ENCODE measurements at regions of chr17 and their contacts with region 1.

Region 1: GRCh38 chr17:77011173-77012011 is 129.4 kb upstream of the SEC14L1 start:
- DNase-seq: peak; percentile 34
- H3K4me3 ChIP-seq: no peak overlapping the region
- H3K27ac ChIP-seq: no peak overlapping the region
- H3K4me1 ChIP-seq: no peaks in the 10 kb centered on the region
- H3K27me3 ChIP-seq: peaks cover 7% of the 10 kb centered on the region
- CTCF ChIP-seq: peak; percentile 82 to 85

Region 2: DNA sequence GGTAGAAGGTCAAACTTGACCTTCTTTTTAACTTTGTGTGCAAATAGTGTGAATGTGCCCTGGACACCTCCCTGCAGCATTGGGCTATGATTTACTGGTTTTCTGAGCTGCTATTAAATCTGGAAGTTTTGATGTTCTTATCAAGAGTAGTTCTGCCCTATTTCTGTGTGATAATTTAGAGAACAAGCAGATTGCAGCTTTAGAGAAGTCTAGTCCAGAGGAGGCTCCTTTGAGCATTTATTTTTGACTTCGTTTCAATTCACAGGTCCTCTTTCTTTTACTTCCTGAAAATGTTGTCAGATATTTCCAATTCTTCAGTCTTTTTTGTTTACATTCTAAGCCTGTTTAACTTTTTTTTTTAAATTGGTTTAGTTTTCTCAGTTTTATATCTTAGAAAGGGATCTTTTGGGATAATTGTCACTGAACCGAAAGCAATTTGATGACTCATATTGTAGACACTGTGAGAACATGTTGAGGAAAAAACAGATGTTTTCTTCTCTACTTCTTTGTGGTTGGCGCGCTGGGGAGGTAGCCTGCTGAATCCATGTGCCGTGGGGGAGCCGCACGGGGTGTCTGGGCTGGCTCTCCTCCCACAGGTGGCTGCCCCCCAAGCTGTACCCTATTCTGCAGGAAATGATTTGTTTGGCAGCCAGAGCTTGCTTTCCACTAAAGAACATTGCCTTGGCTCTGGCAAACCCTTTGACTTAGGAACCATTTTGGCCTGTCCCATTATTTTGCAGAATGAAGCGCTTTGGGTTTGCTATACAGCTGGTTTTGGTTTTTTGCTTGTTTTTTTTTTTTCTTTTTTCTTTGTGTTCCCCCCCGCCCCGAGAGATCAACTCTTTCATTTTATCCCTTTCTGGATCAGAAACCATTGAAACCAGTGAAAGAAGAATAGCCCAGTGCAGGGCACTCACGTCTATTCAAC is 220.1 kb before region 1 on chr17:
- CTCF ChIA-PET with region 1: no interaction called
- dilution Hi-C with region 1: no loop called
- in situ Hi-C with region 1: no loop called
- intact Hi-C with region 1: loop called (anchors 5 kb)
- DNase-seq: peak; percentile 65
- H3K4me3 ChIP-seq: peak overlapping the region in 1 of 3 experiments; percentile 11
- H3K27ac ChIP-seq: no peak overlapping the region
- H3K4me1 ChIP-seq: peaks cover 6% of the 10 kb centered on the region
- H3K27me3 ChIP-seq: no peaks in the 10 kb centered on the region
- CTCF ChIP-seq: no peak

Region 3: DNA sequence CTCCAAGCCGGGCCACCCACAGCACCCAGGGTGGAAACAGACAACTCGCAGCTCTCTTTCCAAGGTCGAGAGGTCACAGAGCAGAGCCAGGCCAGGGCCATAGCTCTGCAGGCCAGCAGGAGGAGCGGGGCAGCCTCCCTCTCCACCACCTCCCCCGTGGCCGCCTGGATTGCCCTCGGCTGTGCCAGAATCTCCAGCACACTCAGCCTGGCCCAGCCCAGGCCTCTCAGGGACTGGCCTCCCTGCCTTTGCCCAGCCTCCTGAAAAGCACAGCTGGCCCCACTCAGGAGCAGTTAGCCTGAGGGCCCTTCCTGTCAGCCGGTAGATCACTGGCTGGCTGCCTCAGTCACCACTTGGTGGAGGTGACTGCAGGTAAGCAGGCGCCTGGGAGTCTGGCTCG is 43.5 kb after region 1 on chr17:
- CTCF ChIA-PET with region 1: interaction called, 4 read pairs
- dilution Hi-C with region 1: no loop called
- in situ Hi-C with region 1: no loop called
- intact Hi-C with region 1: loop called (anchors 1 kb)
- DNase-seq: no peak
- H3K4me3 ChIP-seq: no peak overlapping the region
- H3K27ac ChIP-seq: no peak overlapping the region
- H3K4me1 ChIP-seq: no peaks in the 10 kb centered on the region
- H3K27me3 ChIP-seq: no peaks in the 10 kb centered on the region
- CTCF ChIP-seq: no peak

Region 4: DNA sequence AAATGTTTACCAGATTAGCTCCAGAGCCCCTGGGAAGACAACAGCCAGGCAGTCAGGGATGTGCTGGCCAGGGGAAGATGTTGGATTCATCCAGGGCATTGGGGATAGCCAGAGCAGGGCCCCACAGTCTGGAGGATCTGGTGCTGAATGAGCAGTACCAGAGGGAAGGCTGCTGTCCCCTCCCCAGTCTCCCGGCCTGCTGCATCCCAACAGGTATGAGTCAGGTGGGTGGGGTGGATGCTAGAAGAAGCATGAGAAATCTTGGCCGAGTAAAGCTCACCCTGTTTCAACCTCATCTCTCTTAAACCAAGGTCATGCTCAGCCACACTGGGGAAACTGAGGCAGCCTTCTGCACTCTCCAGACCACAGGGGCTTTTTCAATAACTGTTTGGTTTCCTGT is 57.5 kb after region 1 on chr17:
- CTCF ChIA-PET with region 1: no interaction called
- dilution Hi-C with region 1: no loop called
- in situ Hi-C with region 1: no loop called
- intact Hi-C with region 1: loop called (anchors 1 kb)
- DNase-seq: peak; percentile 54
- H3K4me3 ChIP-seq: no peak overlapping the region
- H3K27ac ChIP-seq: no peak overlapping the region
- H3K4me1 ChIP-seq: peaks cover 9% of the 10 kb centered on the region
- H3K27me3 ChIP-seq: peaks cover 5% of the 10 kb centered on the region
- CTCF ChIP-seq: no peak

Region 5: DNA sequence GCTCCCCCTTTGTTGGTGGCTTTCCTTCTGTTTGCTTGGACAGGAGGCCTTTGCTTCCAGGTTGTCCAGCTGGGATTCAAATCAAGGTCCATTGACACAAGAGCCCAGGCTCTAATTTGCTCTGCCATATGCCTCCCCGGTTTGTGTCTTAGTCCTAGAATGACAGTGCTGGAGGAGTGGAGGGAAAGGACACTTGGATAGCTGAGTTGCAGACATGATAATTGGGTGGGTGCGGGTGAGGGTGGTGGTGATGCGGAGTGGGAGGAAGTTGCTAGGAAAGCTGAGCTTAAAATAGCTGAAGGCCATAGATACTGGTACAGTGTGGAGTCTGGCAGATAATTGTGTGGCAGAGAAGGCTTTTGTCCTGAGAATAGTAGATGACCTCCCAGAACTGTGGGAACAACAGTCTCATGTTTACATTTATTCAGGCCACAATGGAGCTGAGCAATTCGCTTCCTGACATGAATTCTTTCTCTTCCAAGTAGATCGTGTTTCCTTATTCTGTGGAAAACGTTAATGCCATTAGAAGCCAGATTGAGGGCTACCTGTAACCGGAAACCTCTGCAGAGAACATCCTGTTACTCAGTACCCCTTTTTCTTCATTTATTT is 153.2 kb after region 1 on chr17:
- CTCF ChIA-PET with region 1: no interaction called
- dilution Hi-C with region 1: no loop called
- in situ Hi-C with region 1: no loop called
- intact Hi-C with region 1: no loop called
- DNase-seq: no peak
- H3K4me3 ChIP-seq: no peak overlapping the region
- H3K27ac ChIP-seq: no peak overlapping the region
- H3K4me1 ChIP-seq: no peaks in the 10 kb centered on the region
- H3K27me3 ChIP-seq: no peaks in the 10 kb centered on the region
- CTCF ChIP-seq: no peak

Region 6: DNA sequence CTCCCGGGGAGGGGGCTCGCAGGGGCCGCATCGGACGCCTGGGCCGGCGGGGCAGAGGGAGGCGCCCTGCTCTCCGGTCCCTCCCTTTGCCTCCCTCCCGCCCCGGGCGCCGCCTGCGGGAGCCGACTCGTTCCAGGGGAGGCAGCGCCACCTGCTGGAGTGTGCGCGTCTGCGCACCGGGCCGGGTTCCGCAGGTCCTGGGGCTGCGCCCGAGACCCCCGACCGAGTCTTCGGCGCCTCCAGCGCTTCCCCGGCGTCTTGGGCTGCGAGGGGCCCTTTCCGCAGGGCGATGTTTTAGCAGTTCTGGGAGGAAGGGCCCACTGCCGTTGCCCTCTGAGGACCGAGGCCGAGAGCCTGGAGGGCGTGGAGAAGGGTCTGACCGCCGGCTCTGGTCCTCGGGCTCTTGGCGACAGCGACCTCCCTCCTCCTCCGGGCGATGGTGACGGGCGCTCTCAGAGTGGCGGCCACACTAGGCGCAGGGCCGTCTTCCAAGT is 235.7 kb after region 1 on chr17:
- CTCF ChIA-PET with region 1: no interaction called
- dilution Hi-C with region 1: no loop called
- in situ Hi-C with region 1: no loop called
- intact Hi-C with region 1: loop called (anchors 2 kb)
- DNase-seq: peak; percentile 47
- H3K4me3 ChIP-seq: peak overlapping the region; percentile 43 to 61 (median 47)
- H3K27ac ChIP-seq: no peak overlapping the region
- H3K4me1 ChIP-seq: peaks cover 8% of the 10 kb centered on the region
- H3K27me3 ChIP-seq: no peaks in the 10 kb centered on the region
- CTCF ChIP-seq: peak; percentile 55 to 88

Measured in mammary epithelial cell (primary cell).